ENCODE measurements at regions of chr14 and their contacts with region 1.

Region 1: DNA sequence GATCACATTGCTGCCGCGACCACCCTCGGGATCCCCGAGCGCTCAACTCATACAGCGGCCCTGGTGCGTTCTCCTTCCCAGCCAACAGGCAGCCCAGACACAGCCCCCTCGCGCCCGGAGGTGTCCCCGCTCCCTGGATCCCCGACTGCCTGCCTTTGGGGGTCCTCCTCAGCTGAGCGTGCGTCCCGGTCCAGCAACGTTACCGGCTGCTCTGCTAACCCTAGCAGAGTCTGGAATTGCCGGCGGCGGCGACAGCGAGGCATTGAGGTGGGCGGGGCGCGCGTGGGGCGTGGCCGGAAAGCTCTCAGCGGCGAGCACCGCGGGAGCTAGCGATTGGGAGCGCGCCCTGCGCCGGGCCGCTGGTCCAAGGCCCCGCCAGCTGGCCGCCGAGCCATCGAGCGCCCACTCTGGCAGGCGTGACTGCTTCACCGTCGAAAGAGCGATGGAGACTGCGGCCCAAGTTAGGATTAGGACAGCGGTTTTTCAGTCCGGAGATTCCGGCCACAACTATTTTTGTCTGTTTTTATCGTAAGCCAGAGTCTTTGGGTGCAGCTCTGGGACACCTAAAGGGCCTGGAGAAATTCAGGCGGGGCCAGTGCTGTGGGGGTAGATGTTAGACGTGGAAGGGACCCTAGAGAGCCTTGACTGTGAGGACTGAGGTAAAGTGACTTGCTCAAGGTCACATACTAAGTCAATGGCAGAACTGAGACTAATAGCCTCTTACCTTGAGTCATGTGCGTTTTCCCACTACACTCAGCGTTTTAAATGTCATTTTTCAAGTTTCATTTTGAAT is at the start of gene HEATR5A:
- DNase-seq: peak; percentile 90 to 92 (median 91)
- H3K4me3 ChIP-seq: peak within 1 kb of the TSS; percentile 97 to 99
- H3K4me3 Mint-ChIP-seq: peak within 1 kb of the TSS; percentile 92 to 100 (median 98)
- H3K27ac ChIP-seq: peak within 1 kb of the TSS; percentile 66
- H3K27ac Mint-ChIP-seq: peak within 1 kb of the TSS; percentile 80 to 99 (median 96)
- H3K4me1 ChIP-seq: peaks cover 17% of the 10 kb centered on the region
- H3K4me1 Mint-ChIP-seq: peaks cover 11 to 36% (median 20%) of the 10 kb centered on the region in 4 donors
- H3K27me3 ChIP-seq: no peaks in the 10 kb centered on the region
- H3K27me3 Mint-ChIP-seq: no peaks in the 10 kb centered on the region
- total RNA-seq, gene HEATR5A: 15.1 to 16.4 TPM

Region 2: DNA sequence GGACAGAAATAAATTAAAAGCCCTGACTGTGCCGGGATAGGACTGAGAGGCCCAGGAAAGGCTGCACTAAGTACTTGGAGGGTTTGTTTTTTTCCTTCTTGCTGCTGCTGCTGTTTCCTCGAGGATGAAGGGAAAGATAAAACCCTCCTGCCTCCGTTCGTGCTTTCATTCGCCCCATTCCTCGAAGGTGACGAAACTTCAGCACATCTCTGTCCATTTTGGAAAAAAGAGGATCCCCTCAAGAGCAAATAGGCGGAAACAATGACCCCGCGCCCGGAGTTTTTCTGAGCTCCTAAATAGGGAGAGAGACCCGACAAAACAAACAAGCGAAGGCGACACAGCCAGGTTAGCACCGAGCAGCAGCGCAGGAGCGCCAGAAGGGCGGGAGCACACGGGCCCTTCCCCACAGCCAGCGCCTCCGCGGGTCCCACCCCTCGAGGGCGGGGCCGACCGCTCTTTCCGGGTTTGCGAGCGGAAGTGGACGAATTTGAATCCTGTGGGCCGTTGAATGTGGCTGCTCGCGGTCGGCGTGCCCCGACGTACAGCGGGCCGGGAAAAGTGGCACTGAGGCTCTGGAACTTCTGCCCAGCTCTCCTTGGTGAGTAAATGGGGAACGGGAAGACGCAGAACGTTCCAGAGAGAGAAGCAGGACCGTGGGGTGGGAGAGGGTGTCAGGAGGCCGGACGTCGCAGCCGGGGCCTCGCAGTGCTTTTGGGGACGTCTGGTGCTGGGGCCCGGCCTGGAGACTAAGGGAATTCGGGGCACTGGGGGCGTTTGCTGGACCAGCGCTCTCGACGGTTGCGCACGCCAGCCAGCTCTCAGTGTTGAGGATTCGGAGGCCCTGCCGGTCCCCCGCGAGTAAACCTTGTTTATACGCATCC is 861.6 kb before region 1 on chr14 and contains the start of gene G2E3:
- CTCF ChIA-PET with region 1: no interaction called
- POLR2A ChIA-PET with region 1: no interaction called
- intact Hi-C with region 1: loop called (anchors 1 kb)
- DNase-seq: peak; percentile 83 to 85 (median 84)
- H3K4me3 ChIP-seq: peak within 1 kb of the TSS; percentile 93 to 97
- H3K4me3 Mint-ChIP-seq: peak within 1 kb of the TSS; percentile 99 to 100 (median 100)
- H3K27ac ChIP-seq: peak within 1 kb of the TSS; percentile 82
- H3K27ac Mint-ChIP-seq: peak within 1 kb of the TSS; percentile 91 to 99 (median 99)
- H3K4me1 ChIP-seq: peaks cover 28% of the 10 kb centered on the region
- H3K4me1 Mint-ChIP-seq: peaks cover 24 to 49% (median 32%) of the 10 kb centered on the region in 4 donors
- H3K27me3 ChIP-seq: no peaks in the 10 kb centered on the region
- H3K27me3 Mint-ChIP-seq: no peaks in the 10 kb centered on the region
- total RNA-seq, gene G2E3: 26.4 to 32.0 TPM

Region 3: GRCh38 chr14:31026395-31027118 is 394.0 kb before region 1 on chr14:
- CTCF ChIA-PET with region 1: no interaction called
- POLR2A ChIA-PET with region 1: interaction called, 12 read pairs
- intact Hi-C with region 1: loop called (anchors 1 kb)
- DNase-seq: peak; percentile 85 to 91 (median 87)
- H3K4me3 ChIP-seq: peak overlapping the region; percentile 66 to 87
- H3K4me3 Mint-ChIP-seq: peak overlapping the region; percentile 93 to 100 (median 98)
- H3K27ac ChIP-seq: peak overlapping the region; percentile 95
- H3K27ac Mint-ChIP-seq: peak overlapping the region; percentile 96 to 99 (median 99)
- H3K4me1 ChIP-seq: peaks cover 36% of the 10 kb centered on the region
- H3K4me1 Mint-ChIP-seq: peaks cover 39 to 64% (median 48%) of the 10 kb centered on the region in 4 donors
- H3K27me3 ChIP-seq: no peaks in the 10 kb centered on the region
- H3K27me3 Mint-ChIP-seq: no peaks in the 10 kb centered on the region

Region 4: DNA sequence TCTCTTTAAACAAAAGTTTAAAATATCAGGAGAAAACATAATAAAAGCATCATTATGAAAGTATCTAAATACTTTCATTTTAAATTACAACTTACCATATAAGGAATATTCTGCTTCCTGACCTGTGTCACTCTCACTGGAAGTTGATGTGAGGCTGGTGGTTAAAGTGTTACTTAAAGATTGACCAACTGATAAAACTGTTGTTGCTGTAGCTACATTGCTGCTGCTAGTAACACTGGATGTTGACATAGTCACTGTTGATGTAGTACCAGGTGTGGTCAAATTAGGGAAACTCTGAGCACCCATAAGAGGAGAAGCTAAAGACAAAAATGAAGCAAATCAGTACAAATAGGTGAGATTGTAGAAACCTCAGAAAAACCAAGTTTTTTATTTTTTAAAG is 292.8 kb before region 1 on chr14:
- CTCF ChIA-PET with region 1: no interaction called
- POLR2A ChIA-PET with region 1: interaction called, 8 read pairs
- intact Hi-C with region 1: loop called (anchors 1 kb)
- DNase-seq: peak; percentile 80 to 91 (median 85)
- H3K4me3 ChIP-seq: no peak overlapping the region
- H3K4me3 Mint-ChIP-seq: peak overlapping the region in 7 of 8 donors; percentile 5 to 80 (median 54)
- H3K27ac ChIP-seq: peak overlapping the region; percentile 63
- H3K27ac Mint-ChIP-seq: peak overlapping the region; percentile 65 to 98 (median 87)
- H3K4me1 ChIP-seq: peaks cover 47% of the 10 kb centered on the region
- H3K4me1 Mint-ChIP-seq: peaks cover 39 to 58% (median 49%) of the 10 kb centered on the region in 4 donors
- H3K27me3 ChIP-seq: no peaks in the 10 kb centered on the region
- H3K27me3 Mint-ChIP-seq: no peaks in the 10 kb centered on the region

Region 5: DNA sequence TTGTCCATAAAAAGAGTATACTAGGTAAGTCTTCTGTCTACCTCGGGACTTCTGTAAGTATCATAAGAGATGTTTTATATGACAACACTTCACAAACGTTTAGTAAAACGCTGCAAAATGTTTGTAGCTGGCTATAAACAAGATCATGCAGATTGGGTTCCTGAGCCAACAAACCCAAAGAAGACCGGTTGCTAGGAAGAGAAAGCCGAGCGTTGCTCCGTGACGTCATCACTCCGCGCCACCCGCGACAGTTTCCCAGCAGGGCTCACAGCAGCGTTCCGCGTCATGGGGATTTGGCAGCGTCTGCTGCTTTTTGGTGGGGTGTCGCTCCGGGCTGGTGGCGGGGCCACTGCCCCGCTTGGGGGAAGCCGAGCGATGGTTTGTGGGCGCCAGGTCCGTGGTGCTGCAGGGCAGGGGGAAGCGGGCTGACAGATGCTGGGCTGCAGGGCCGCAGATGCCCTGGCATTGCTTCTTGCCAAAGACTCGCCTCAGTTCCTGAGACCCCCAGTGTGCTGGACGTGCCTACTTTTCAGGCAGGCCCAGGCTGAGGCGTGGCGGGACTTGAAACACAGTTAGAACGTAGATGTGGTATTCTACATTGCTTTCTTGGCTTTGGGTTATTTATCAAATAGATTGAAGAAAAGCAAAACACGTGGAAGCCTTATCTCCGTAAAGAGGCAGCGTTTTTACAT is 140.8 kb after region 1 on chr14 and contains the start of gene NUBPL:
- CTCF ChIA-PET with region 1: no interaction called
- POLR2A ChIA-PET with region 1: interaction called, 8 read pairs
- intact Hi-C with region 1: loop called (anchors 1 kb)
- DNase-seq: peak; percentile 96 to 98 (median 97)
- H3K4me3 ChIP-seq: peak within 1 kb of the TSS; percentile 94
- H3K4me3 Mint-ChIP-seq: peak within 1 kb of the TSS; percentile 94 to 98 (median 96)
- H3K27ac ChIP-seq: peak within 1 kb of the TSS; percentile 62
- H3K27ac Mint-ChIP-seq: peak within 1 kb of the TSS; percentile 94 to 99 (median 98)
- H3K4me1 ChIP-seq: peaks cover 17% of the 10 kb centered on the region
- H3K4me1 Mint-ChIP-seq: peaks cover 16 to 27% (median 21%) of the 10 kb centered on the region in 4 donors
- H3K27me3 ChIP-seq: no peaks in the 10 kb centered on the region
- H3K27me3 Mint-ChIP-seq: peaks cover 9 to 21% of the 10 kb centered on the region in 2 donors
- total RNA-seq, gene NUBPL: 7.4 to 7.5 TPM

Measured in CD4-positive, alpha-beta memory T cell (primary cell).